Cardiac septum (tissue), 1 donor: ENCODE measurements at regions of chr3 and their contacts with region 1.

Region 1: GRCh38 chr3:74693696-74694393 is 79.4 kb upstream of the CNTN3 start:
- DNase-seq: no peak

Region 2: DNA sequence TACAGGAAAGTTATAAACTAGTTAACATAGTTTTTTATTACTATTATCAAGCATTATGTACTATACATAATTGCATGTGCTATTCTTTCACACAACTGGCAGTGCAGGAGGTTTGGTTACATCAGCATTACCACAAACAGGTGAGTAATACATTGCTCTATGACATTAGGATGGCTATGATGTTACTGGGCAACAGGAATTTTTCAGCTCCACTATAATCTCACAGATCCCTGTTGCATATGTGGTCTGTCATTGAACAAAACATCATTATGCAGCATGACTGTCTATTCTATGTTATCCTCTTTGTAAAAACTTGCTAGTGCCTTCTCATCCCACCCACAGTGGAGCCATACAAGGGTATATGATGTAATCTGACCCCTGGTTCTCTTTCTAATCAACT is 1032.6 kb before region 1 on chr3:
- intact Hi-C with region 1: no loop called
- DNase-seq: no peak

Region 3: GRCh38 chr3:73939985-73940384 is 753.9 kb before region 1 on chr3:
- intact Hi-C with region 1: no loop called
- DNase-seq: no peak

Region 4: GRCh38 chr3:74648107-74648506 is 45.7 kb before region 1 on chr3:
- intact Hi-C with region 1: loop called (anchors 5 kb)
- DNase-seq: no peak